Activated T-helper 1 cell treated with anti-CD3 and anti-CD28 coated beads, Interleukin-12 subunit alpha, Interleukin-12 subunit beta, Interleukin-2, Interleukin-4 antibody, amounts not matched to agents 30 ng/mL and 10 ng/mL and 1 ng/mL, durations not matched to agents 14 hours and 24 hours and 36 hours (primary cell): ENCODE measurements at regions of chrX and their contacts with region 1.

Region 1: DNA sequence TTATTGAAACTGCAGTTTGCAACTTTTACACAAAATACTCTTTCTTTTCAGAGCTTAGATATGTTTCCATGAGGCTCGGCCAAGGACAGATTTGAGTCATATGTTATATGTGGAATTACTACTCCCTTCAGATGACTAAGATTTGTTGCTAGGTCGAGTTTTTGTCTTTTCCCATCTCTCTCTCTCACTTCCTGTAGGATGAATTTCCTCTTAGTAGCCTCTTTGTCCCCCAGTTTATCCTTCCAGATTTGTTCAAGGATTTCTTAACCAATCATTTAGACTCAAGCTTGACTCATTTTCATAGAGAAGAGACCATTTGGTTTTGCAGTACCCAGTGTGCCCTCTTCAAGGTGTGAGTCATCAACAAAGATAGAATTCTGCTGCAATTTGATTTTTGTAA is 209.2 kb downstream of the GLUD2 start:
- DNase-seq: no peak
- H3K4me3 Mint-ChIP-seq: no peak overlapping the region
- H3K27ac Mint-ChIP-seq: no peak overlapping the region
- H3K4me1 Mint-ChIP-seq: no peaks in the 10 kb centered on the region
- H3K27me3 Mint-ChIP-seq: no peaks in the 10 kb centered on the region

Region 2: DNA sequence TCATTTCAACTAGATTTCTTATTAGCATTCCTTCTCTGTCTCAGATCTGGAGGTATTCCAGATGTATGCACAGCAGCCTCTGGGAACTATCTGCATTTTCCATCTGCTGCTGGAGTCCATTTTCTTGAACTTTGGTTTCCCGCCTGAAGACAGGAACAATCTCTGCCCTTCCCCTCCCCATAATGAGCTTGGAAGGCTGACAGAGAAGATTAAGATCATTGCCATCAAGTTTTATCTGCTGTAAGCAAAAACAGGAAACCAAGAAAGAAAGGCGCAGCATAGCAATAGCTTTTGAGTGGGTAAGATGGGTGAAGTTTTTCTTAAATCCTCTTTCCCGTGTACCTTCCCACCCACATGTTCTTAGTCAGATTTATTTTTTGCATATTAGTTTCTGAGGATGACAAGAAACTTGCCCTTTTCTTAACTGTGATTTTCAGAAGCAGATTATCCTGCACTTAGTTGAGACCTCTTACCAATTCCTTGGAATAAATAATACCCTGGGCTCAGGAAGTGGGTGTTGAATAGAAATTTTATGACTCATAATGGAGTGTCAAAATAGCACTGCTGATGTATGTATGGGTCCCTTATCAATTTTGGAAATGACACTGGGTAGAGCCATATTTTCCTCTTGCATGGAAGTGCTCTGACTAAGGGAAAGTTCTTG is 459.3 kb before region 1 on chrX:
- intact Hi-C with region 1: loop called (anchors 5 kb)
- DNase-seq: no peak
- H3K4me3 Mint-ChIP-seq: peak overlapping the region; percentile 23
- H3K27ac Mint-ChIP-seq: peak overlapping the region; percentile 85
- H3K4me1 Mint-ChIP-seq: peaks cover 36% of the 10 kb centered on the region
- H3K27me3 Mint-ChIP-seq: no peaks in the 10 kb centered on the region

Region 3: GRCh38 chrX:121671649-121672048 is 415.0 kb after region 1 on chrX:
- intact Hi-C with region 1: no loop called
- DNase-seq: no peak
- H3K4me3 Mint-ChIP-seq: no peak overlapping the region
- H3K27ac Mint-ChIP-seq: no peak overlapping the region
- H3K4me1 Mint-ChIP-seq: no peaks in the 10 kb centered on the region
- H3K27me3 Mint-ChIP-seq: no peaks in the 10 kb centered on the region